CD8-positive, alpha-beta memory T cell (primary cell): ENCODE measurements at regions of chr11 and their contacts with region 1.

Region 1: DNA sequence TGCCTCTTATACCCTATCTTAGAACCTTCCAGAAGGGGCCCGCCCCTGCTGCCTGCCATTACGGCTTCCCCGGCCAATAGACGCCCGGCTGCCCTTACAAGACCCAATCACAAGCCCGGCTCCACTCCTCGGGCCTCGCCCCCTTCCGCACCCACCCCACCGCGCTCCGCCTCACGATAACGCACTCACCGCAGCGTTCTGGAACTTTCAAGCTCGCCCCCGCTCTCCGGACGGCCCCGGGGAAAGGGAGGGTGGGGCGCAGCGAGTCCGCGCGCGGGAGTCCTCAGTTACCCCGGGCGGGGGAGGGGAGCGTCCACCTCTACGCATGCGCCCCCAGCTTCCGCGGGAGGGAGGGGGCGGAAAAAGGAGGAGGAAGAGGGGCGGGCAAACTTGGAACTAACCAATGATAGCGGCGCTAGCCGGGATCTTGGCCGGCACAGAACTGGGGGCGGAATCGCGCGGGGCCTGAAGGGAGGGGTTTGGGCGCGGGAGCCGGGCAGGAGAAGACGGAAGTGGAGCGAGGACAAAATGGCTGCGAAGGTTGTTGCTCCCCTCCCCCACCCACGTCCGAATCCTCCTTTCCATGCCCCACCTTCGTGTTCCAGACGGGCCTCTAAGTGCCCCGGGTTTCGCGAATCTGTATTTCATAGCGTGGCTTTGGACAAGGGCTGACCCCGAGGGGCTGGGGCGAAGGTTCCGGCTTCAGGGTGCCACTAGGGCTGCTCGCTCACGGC is 389 bp upstream of the HSPA8 start:
- DNase-seq: peak; percentile 98 to 100 (median 100)
- H3K4me3 ChIP-seq: peak overlapping the region; percentile 96
- H3K4me3 Mint-ChIP-seq: peak overlapping the region; percentile 95 to 100 (median 99)
- H3K27ac ChIP-seq: peak overlapping the region; percentile 96
- H3K27ac Mint-ChIP-seq: peak overlapping the region; percentile 93 to 100 (median 98)
- H3K4me1 ChIP-seq: peaks cover 53% of the 10 kb centered on the region
- H3K4me1 Mint-ChIP-seq: peaks cover 63 to 68% (median 66%) of the 10 kb centered on the region in 3 donors
- H3K27me3 ChIP-seq: no peaks in the 10 kb centered on the region
- H3K27me3 Mint-ChIP-seq: peaks cover 0 to 6% of the 10 kb centered on the region in 2 donors

Region 2: GRCh38 chr11:122843281-122844141 is 218.8 kb before region 1 on chr11:
- CTCF ChIA-PET with region 1: interaction called, 3 read pairs
- POLR2A ChIA-PET with region 1: interaction called, 14 read pairs
- DNase-seq: peak; percentile 45 to 88 (median 76)
- H3K4me3 ChIP-seq: peak overlapping the region; percentile 34
- H3K4me3 Mint-ChIP-seq: peak overlapping the region; percentile 57 to 81 (median 73)
- H3K27ac ChIP-seq: peak overlapping the region; percentile 74
- H3K27ac Mint-ChIP-seq: peak overlapping the region; percentile 90 to 96 (median 94)
- H3K4me1 ChIP-seq: peaks cover 76% of the 10 kb centered on the region
- H3K4me1 Mint-ChIP-seq: peaks cover 81 to 85% (median 85%) of the 10 kb centered on the region in 3 donors
- H3K27me3 ChIP-seq: no peaks in the 10 kb centered on the region
- H3K27me3 Mint-ChIP-seq: no peaks in the 10 kb centered on the region

Region 3: GRCh38 chr11:123093739-123094138 is 31.4 kb after region 1 on chr11:
- CTCF ChIA-PET with region 1: interaction called, 184 read pairs
- POLR2A ChIA-PET with region 1: interaction called, 73 read pairs
- DNase-seq: no peak
- H3K4me3 ChIP-seq: no peak overlapping the region
- H3K4me3 Mint-ChIP-seq: no peak overlapping the region
- H3K27ac ChIP-seq: no peak overlapping the region
- H3K27ac Mint-ChIP-seq: no peak overlapping the region
- H3K4me1 ChIP-seq: no peaks in the 10 kb centered on the region
- H3K4me1 Mint-ChIP-seq: peaks cover 8 to 24% (median 21%) of the 10 kb centered on the region in 3 donors
- H3K27me3 ChIP-seq: no peaks in the 10 kb centered on the region
- H3K27me3 Mint-ChIP-seq: no peaks in the 10 kb centered on the region

Region 4: DNA sequence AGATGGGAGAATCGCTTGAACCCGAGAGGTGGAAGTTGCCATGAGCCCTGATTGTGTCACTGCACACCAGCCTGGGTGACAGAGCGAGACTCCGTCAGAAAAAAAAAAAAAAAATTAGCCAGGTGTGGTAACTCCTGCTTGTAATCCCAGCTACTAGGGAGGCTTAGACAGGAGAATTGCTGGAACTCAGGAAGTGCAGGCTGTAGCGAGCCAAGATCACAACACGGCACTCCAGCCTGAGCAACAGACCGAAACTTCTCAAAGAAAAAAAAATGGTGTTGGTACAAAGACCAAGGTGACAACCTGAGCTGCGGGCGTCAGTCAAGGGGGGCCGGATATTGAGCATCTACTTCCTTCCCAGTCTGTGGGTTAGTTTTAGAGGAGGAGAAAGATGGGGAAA is 48.0 kb after region 1 on chr11:
- CTCF ChIA-PET with region 1: interaction called, 110 read pairs
- POLR2A ChIA-PET with region 1: interaction called, 7 read pairs
- DNase-seq: no peak
- H3K4me3 ChIP-seq: no peak overlapping the region
- H3K4me3 Mint-ChIP-seq: peak overlapping the region; percentile 15 to 74 (median 55)
- H3K27ac ChIP-seq: no peak overlapping the region
- H3K27ac Mint-ChIP-seq: peak overlapping the region in 6 of 8 donors; percentile 6 to 82 (median 38)
- H3K4me1 ChIP-seq: no peaks in the 10 kb centered on the region
- H3K4me1 Mint-ChIP-seq: peaks cover 5 to 12% (median 5%) of the 10 kb centered on the region in 3 donors
- H3K27me3 ChIP-seq: no peaks in the 10 kb centered on the region
- H3K27me3 Mint-ChIP-seq: peaks cover 0 to 3% of the 10 kb centered on the region in 2 donors

Region 5: GRCh38 chr11:123145661-123146060 is 83.3 kb after region 1 on chr11:
- CTCF ChIA-PET with region 1: no interaction called
- POLR2A ChIA-PET with region 1: no interaction called
- DNase-seq: no peak
- H3K4me3 ChIP-seq: no peak overlapping the region
- H3K4me3 Mint-ChIP-seq: no peak overlapping the region
- H3K27ac ChIP-seq: no peak overlapping the region
- H3K27ac Mint-ChIP-seq: no peak overlapping the region
- H3K4me1 ChIP-seq: no peaks in the 10 kb centered on the region
- H3K4me1 Mint-ChIP-seq: no peaks in the 10 kb centered on the region
- H3K27me3 ChIP-seq: no peaks in the 10 kb centered on the region
- H3K27me3 Mint-ChIP-seq: peaks cover 3 to 7% of the 10 kb centered on the region in 2 donors

Region 6: DNA sequence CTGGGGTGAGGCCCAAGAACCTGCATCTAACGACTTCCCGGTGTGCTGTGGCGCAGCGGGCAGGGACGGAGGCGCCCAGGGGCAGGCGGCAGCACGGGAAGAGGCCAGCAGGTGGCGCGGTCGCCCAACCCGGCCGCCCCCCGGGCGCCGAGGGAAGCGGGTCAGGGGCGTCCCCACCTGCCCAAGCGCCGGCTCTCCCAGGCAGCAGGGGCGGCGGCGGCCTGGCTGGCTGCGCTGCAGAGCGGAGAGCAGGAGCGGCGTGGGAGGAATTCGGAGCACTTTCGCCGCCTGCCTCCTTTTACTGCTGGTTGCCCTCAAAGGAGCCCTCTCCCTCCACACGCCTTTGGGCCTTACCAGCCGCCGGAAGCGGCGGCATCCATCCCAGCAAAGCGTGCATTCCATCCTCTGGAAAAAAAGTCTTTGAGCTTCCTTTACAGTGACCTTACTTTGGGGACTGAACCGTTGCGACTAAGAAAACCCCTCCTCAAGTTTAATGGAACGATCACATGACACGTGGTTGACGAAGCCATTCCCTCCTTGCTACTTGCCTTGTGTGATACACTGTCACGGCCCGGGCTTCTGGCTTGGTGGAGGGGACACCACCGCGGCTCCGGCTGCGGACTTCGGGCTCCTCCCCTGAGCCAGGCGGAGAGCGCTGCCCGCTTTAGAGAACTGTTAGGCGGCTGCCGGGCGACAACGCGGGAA is 239.5 kb after region 1 on chr11:
- CTCF ChIA-PET with region 1: no interaction called
- POLR2A ChIA-PET with region 1: no interaction called
- DNase-seq: peak; percentile 48 to 69 (median 52)
- H3K4me3 ChIP-seq: peak overlapping the region; percentile 55
- H3K4me3 Mint-ChIP-seq: peak overlapping the region; percentile 65 to 80 (median 74)
- H3K27ac ChIP-seq: no peak overlapping the region
- H3K27ac Mint-ChIP-seq: peak overlapping the region; percentile 27 to 90 (median 76)
- H3K4me1 ChIP-seq: peaks cover 24% of the 10 kb centered on the region
- H3K4me1 Mint-ChIP-seq: peaks cover 29 to 43% (median 41%) of the 10 kb centered on the region in 3 donors
- H3K27me3 ChIP-seq: no peaks in the 10 kb centered on the region
- H3K27me3 Mint-ChIP-seq: no peaks in the 10 kb centered on the region

Region 7: GRCh38 chr11:123616505-123617198 is 554.3 kb after region 1 on chr11:
- CTCF ChIA-PET with region 1: no interaction called
- POLR2A ChIA-PET with region 1: no interaction called
- DNase-seq: no peak
- H3K4me3 ChIP-seq: no peak overlapping the region
- H3K4me3 Mint-ChIP-seq: no peak overlapping the region
- H3K27ac ChIP-seq: no peak overlapping the region
- H3K27ac Mint-ChIP-seq: peak overlapping the region in 1 of 8 donors; percentile 62
- H3K4me1 ChIP-seq: no peaks in the 10 kb centered on the region
- H3K4me1 Mint-ChIP-seq: no peaks in the 10 kb centered on the region
- H3K27me3 ChIP-seq: no peaks in the 10 kb centered on the region
- H3K27me3 Mint-ChIP-seq: no peaks in the 10 kb centered on the region